Natural killer cell (primary cell): ENCODE measurements at regions of chr21 and their contacts with region 1.

Region 1: DNA sequence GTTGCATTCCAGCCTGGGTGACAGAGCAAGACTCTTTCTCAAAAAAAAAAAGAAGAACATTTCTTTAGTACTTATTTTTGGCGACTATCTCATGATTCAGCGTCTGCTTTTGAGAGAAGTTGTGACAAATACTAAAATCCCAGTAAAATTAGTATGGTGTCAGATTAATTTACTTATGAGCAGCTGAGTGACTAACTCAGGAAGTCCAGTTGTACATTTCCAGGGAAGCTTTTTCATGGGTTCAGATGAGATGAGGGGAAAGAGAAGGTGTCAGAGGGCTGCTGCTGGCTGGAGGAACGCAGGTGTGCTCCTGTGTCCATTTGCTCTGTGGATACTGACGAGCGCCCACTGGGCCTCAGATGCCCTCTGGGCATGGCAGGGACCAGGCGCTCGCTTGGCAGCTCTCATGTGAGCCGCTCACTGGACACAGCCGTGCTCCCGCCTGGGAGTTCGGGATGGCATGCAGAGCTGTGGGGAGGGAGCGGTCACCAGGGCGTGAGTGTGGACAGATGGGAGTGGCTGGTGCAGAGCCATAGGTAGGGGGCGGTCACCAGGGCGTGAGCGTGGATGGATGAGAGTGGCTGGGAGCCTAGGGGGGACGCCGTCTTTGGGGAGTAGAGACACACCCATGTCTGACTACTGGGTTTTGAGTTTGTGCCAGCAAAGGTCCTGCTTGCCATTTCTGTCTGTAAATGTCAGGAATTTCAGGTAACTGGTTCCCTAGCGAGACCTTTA is 55.0 kb downstream of the ADARB1 start:
- DNase-seq: no peak
- ATAC-seq: no peak
- H3K4me3 ChIP-seq: no peak overlapping the region
- H3K4me3 Mint-ChIP-seq: no peak overlapping the region
- H3K27ac ChIP-seq: no peak overlapping the region
- H3K27ac Mint-ChIP-seq: no peak overlapping the region
- H3K4me1 ChIP-seq: peaks cover 13% of the 10 kb centered on the region
- H3K4me1 Mint-ChIP-seq: no peaks in the 10 kb centered on the region
- H3K27me3 ChIP-seq: no peaks in the 10 kb centered on the region
- H3K27me3 Mint-ChIP-seq: no peaks in the 10 kb centered on the region
- CTCF ChIP-seq: no peak

Region 2: GRCh38 chr21:44892536-44893277 is 236.6 kb before region 1 on chr21:
- intact Hi-C with region 1: loop called (anchors 5 kb)
- DNase-seq: peak; percentile 77 to 89
- ATAC-seq: peak; percentile 79 to 92 (median 80)
- H3K4me3 ChIP-seq: no peak overlapping the region
- H3K4me3 Mint-ChIP-seq: no peak overlapping the region
- H3K27ac ChIP-seq: no peak overlapping the region
- H3K27ac Mint-ChIP-seq: peak overlapping the region; percentile 58 to 76
- H3K4me1 ChIP-seq: peaks cover 41% of the 10 kb centered on the region
- H3K4me1 Mint-ChIP-seq: peaks cover 17 to 22% of the 10 kb centered on the region in 2 donors
- H3K27me3 ChIP-seq: no peaks in the 10 kb centered on the region
- H3K27me3 Mint-ChIP-seq: no peaks in the 10 kb centered on the region
- CTCF ChIP-seq: peak; percentile 86

Region 3: DNA sequence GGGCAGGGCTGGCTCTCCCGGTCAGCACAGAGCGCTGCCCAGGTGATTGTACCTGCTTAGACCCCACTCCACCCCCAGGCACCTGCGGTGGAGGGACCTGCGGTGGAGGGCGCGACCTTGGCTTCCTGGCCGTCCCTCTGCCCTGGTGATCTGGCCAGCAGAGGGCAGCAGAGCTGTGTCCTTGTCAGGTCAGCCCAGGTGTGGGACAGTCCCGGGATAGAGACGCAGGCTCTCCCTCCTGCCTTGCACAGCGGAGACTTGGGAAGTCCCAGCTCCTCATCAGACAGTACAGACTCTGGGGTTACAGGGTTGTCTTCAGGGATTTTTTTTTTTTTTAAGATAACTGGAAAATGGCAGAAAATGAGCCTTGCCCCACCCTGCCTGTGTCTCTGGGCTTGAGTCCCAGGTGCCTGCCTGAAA is 179.6 kb before region 1 on chr21:
- intact Hi-C with region 1: loop called (anchors 1 kb)
- DNase-seq: peak; percentile 79 to 90
- ATAC-seq: peak; percentile 85 to 95 (median 94)
- H3K4me3 ChIP-seq: no peak overlapping the region
- H3K4me3 Mint-ChIP-seq: no peak overlapping the region
- H3K27ac ChIP-seq: no peak overlapping the region
- H3K27ac Mint-ChIP-seq: no peak overlapping the region
- H3K4me1 ChIP-seq: peaks cover 19% of the 10 kb centered on the region
- H3K4me1 Mint-ChIP-seq: peaks cover 4 to 15% of the 10 kb centered on the region in 2 donors
- H3K27me3 ChIP-seq: no peaks in the 10 kb centered on the region
- H3K27me3 Mint-ChIP-seq: no peaks in the 10 kb centered on the region
- CTCF ChIP-seq: peak; percentile 92

Region 4: GRCh38 chr21:45074818-45075595 is 54.3 kb before region 1 on chr21:
- intact Hi-C with region 1: loop called (anchors 2 kb)
- DNase-seq: peak in 1 of 2 donors; percentile 51
- ATAC-seq: no peak
- H3K4me3 ChIP-seq: peak overlapping the region; percentile 49
- H3K4me3 Mint-ChIP-seq: peak overlapping the region; percentile 84
- H3K27ac ChIP-seq: no peak overlapping the region
- H3K27ac Mint-ChIP-seq: peak overlapping the region in 1 of 2 donors; percentile 45
- H3K4me1 ChIP-seq: peaks cover 47% of the 10 kb centered on the region
- H3K4me1 Mint-ChIP-seq: peaks cover 42 to 51% of the 10 kb centered on the region in 2 donors
- H3K27me3 ChIP-seq: no peaks in the 10 kb centered on the region
- H3K27me3 Mint-ChIP-seq: peaks cover 5 to 6% of the 10 kb centered on the region in 2 donors
- CTCF ChIP-seq: no peak

Region 5: GRCh38 chr21:45098867-45099266 is 30.5 kb before region 1 on chr21:
- intact Hi-C with region 1: no loop called
- DNase-seq: peak in 1 of 2 donors; percentile 30
- ATAC-seq: no peak
- H3K4me3 ChIP-seq: no peak overlapping the region
- H3K4me3 Mint-ChIP-seq: no peak overlapping the region
- H3K27ac ChIP-seq: no peak overlapping the region
- H3K27ac Mint-ChIP-seq: no peak overlapping the region
- H3K4me1 ChIP-seq: peaks cover 21% of the 10 kb centered on the region
- H3K4me1 Mint-ChIP-seq: peaks cover 0 to 15% of the 10 kb centered on the region in 2 donors
- H3K27me3 ChIP-seq: no peaks in the 10 kb centered on the region
- H3K27me3 Mint-ChIP-seq: no peaks in the 10 kb centered on the region
- CTCF ChIP-seq: no peak